ENCODE measurements at regions of chr9 and their contacts with region 1.

Region 1: GRCh38 chr9:73916016-73916673 is 581.0 kb upstream of the RORB start:
- DNase-seq: peak; percentile 29
- ATAC-seq: peak; percentile 97
- H3K4me3 ChIP-seq: no peak overlapping the region
- H3K27ac ChIP-seq: no peak overlapping the region
- H3K4me1 ChIP-seq: no peaks in the 10 kb centered on the region
- H3K27me3 ChIP-seq: no peaks in the 10 kb centered on the region
- CTCF ChIP-seq: peak; percentile 64
- EP300 ChIP-seq: no peak
- POLR2A ChIP-seq: no peak
- RAD21 ChIP-seq: no peak

Region 2: GRCh38 chr9:74025402-74025894 is 109.3 kb after region 1 on chr9:
- CTCF ChIA-PET with region 1: no interaction called
- POLR2A ChIA-PET with region 1: no interaction called
- in situ Hi-C with region 1: no loop called
- intact Hi-C with region 1: loop called (anchors 1 kb)
- DNase-seq: peak; percentile 96
- ATAC-seq: peak; percentile 97
- H3K4me3 ChIP-seq: no peak overlapping the region; a peak in 1 of 6 replicates
- H3K27ac ChIP-seq: peak overlapping the region; percentile 84
- H3K4me1 ChIP-seq: peaks cover 41% of the 10 kb centered on the region
- H3K27me3 ChIP-seq: no peaks in the 10 kb centered on the region
- CTCF ChIP-seq: no peak
- EP300 ChIP-seq: peak in 1 of 2 experiments; percentile 98; a peak in 2 of 4 replicates
- POLR2A ChIP-seq: no peak
- RAD21 ChIP-seq: no peak

Region 3: GRCh38 chr9:74277532-74277931 is 361.4 kb after region 1 on chr9:
- CTCF ChIA-PET with region 1: no interaction called
- POLR2A ChIA-PET with region 1: no interaction called
- in situ Hi-C with region 1: no loop called
- intact Hi-C with region 1: loop called (anchors 1 kb)
- DNase-seq: no peak
- ATAC-seq: no peak
- H3K4me3 ChIP-seq: no peak overlapping the region
- H3K27ac ChIP-seq: no peak overlapping the region
- H3K4me1 ChIP-seq: no peaks in the 10 kb centered on the region
- H3K27me3 ChIP-seq: no peaks in the 10 kb centered on the region
- CTCF ChIP-seq: no peak
- EP300 ChIP-seq: no peak
- POLR2A ChIP-seq: no peak
- RAD21 ChIP-seq: no peak

Region 4: GRCh38 chr9:74379718-74380117 is 463.6 kb after region 1 on chr9:
- CTCF ChIA-PET with region 1: interaction called, 7 read pairs
- POLR2A ChIA-PET with region 1: no interaction called
- in situ Hi-C with region 1: no loop called
- intact Hi-C with region 1: loop called (anchors 1 kb)
- DNase-seq: peak; percentile 40
- ATAC-seq: peak; percentile 94
- H3K4me3 ChIP-seq: no peak overlapping the region
- H3K27ac ChIP-seq: no peak overlapping the region
- H3K4me1 ChIP-seq: no peaks in the 10 kb centered on the region
- H3K27me3 ChIP-seq: no peaks in the 10 kb centered on the region
- CTCF ChIP-seq: peak; percentile 72
- EP300 ChIP-seq: no peak
- POLR2A ChIP-seq: no peak
- RAD21 ChIP-seq: 0 out of 2 replicates have a peak, but pooled peaks have one; percentile 43

Measured in HepG2 (cell line).